ENCODE measurements at regions of chr1 and their contacts with region 1.

Region 1: DNA sequence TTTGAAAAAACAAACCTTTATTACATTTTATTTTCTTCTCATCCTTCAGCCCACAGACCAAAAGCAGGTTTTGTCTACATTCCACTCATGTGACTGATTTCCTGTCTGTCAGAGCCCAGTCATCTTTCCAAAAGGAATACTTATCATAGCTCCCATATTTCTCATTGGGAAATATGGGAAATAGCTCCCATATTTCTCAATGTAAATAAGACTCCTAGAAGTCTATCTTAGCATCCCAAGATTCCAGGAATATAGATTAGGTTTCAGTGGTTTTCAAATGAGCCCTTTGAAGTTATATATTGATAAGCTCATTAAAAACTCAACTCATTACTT is 19.1 kb upstream of the NRDC start:
- DNase-seq: no peak
- ATAC-seq: no peak

Region 2: GRCh38 chr1:51850420-51851223 is 47.0 kb before region 1 on chr1:
- intact Hi-C with region 1: no loop called
- DNase-seq: peak; percentile 65
- ATAC-seq: peak; percentile 76

Region 3: DNA sequence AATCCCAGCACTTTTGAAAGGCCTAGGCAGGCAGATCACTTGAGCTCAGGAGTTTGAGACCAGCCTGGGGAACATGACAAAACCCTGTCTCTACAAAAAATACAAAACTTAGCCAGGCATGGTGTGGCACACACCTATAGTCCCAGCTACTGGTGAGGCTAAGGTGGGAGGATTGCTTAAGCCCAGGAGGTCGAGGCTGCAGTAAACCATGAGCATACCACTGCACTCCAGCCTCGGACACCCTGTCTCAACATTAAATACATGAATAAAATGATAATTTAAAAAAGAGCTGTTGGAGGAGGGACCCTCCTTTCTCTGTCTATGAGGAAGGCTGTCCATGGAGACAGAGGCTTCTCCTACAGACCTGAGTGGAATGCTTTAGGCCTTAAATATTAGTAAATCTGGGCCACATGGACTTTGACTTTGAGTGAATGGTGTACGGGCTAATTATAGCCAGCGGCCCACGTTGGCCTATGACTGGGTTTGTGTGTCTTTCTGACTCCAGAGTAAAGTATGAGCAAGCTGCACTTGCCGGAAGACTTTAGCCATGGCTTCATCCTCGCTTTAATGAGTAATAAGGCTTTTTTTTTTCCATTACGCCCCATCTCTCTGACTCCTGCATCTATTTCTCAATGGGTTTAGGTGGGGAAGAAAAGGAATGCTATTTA is 71.5 kb after region 1 on chr1:
- intact Hi-C with region 1: no loop called
- DNase-seq: no peak
- ATAC-seq: no peak

Region 4: DNA sequence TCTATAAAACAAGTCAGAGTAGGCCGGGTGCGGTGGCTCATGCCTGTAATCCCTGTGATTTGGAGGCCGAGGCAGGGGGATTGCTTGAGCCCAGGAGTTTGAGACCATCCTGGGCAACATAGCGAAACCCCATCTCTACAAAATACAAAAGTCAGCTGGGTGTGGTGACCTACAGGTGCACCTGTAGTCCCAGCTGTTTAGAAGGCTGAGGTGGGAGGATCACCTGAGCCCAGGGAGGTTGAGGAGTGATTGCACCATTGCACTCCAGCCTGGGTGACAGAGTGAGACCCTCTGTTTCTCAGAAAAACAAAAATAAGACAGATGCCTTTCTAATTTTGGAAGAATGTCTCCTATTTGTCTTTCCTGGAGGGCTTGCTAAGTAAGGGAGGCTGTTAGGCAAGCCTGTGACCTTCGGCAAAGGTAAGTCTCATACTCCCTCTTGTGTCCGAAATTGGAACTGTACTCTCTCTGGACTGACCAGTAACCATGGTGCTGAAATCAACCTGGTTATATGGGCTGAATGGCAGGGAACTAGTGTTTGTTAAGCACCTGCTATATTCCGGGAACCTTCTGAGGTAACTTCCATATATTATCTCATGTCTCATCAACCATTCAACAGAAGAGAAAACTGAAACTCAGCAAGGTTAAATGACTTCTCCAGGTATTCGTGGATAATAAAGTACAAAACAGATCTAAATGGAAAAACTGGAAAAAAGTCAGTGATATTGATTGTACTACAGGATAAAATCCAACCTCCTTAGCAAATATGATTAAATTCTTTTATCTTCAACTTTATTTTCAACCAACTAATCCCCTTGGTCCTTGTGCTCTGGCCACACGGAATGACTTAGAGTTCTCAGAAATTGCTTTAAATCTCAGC is 104.6 kb after region 1 on chr1:
- intact Hi-C with region 1: loop called (anchors 5 kb)
- DNase-seq: no peak
- ATAC-seq: peak; percentile 88

Measured in left ventricle myocardium superior (tissue), 1 donor.